Activated CD4-positive, alpha-beta memory T cell treated with anti-CD3 and anti-CD28 coated beads for 36 hours (primary cell): ENCODE measurements at regions of chr11 and their contacts with region 1.

Region 1: GRCh38 chr11:17978553-17979287 is 34.1 kb downstream of the SERGEF start:
- DNase-seq: peak; percentile 38
- H3K4me3 Mint-ChIP-seq: no peak overlapping the region
- H3K27ac Mint-ChIP-seq: no peak overlapping the region
- H3K4me1 Mint-ChIP-seq: peaks cover 3% of the 10 kb centered on the region
- H3K27me3 Mint-ChIP-seq: no peaks in the 10 kb centered on the region

Region 2: GRCh38 chr11:17598700-17599459 is 379.8 kb before region 1 on chr11:
- CTCF ChIA-PET with region 1: interaction called, 19 read pairs
- POLR2A ChIA-PET with region 1: no interaction called
- intact Hi-C with region 1: loop called (anchors 1 kb)
- DNase-seq: peak; percentile 80
- H3K4me3 Mint-ChIP-seq: no peak overlapping the region
- H3K27ac Mint-ChIP-seq: no peak overlapping the region
- H3K4me1 Mint-ChIP-seq: peaks cover 10% of the 10 kb centered on the region
- H3K27me3 Mint-ChIP-seq: peaks cover 3% of the 10 kb centered on the region

Region 3: GRCh38 chr11:17730608-17731462 is 247.9 kb before region 1 on chr11:
- CTCF ChIA-PET with region 1: interaction called, 168 read pairs
- POLR2A ChIA-PET with region 1: no interaction called
- intact Hi-C with region 1: loop called (anchors 1 kb)
- DNase-seq: peak; percentile 80
- H3K4me3 Mint-ChIP-seq: no peak overlapping the region
- H3K27ac Mint-ChIP-seq: no peak overlapping the region
- H3K4me1 Mint-ChIP-seq: peaks cover 5% of the 10 kb centered on the region
- H3K27me3 Mint-ChIP-seq: peaks cover 39% of the 10 kb centered on the region

Region 4: GRCh38 chr11:17760102-17761029 is 218.4 kb before region 1 on chr11:
- CTCF ChIA-PET with region 1: interaction called, 12 read pairs
- POLR2A ChIA-PET with region 1: no interaction called
- intact Hi-C with region 1: no loop called
- DNase-seq: peak; percentile 51
- H3K4me3 Mint-ChIP-seq: no peak overlapping the region
- H3K27ac Mint-ChIP-seq: no peak overlapping the region
- H3K4me1 Mint-ChIP-seq: no peaks in the 10 kb centered on the region
- H3K27me3 Mint-ChIP-seq: peaks cover 2% of the 10 kb centered on the region

Region 5: GRCh38 chr11:17968206-17968605 is 10.5 kb before region 1 on chr11:
- CTCF ChIA-PET with region 1: interaction called, 18 read pairs
- POLR2A ChIA-PET with region 1: no interaction called
- intact Hi-C with region 1: no loop called
- DNase-seq: no peak
- H3K4me3 Mint-ChIP-seq: no peak overlapping the region
- H3K27ac Mint-ChIP-seq: no peak overlapping the region
- H3K4me1 Mint-ChIP-seq: no peaks in the 10 kb centered on the region
- H3K27me3 Mint-ChIP-seq: no peaks in the 10 kb centered on the region

Region 6: GRCh38 chr11:17991783-17992433 is 13.2 kb after region 1 on chr11:
- CTCF ChIA-PET with region 1: interaction called, 47 read pairs
- POLR2A ChIA-PET with region 1: no interaction called
- intact Hi-C with region 1: no loop called
- DNase-seq: peak; percentile 57
- H3K4me3 Mint-ChIP-seq: no peak overlapping the region
- H3K27ac Mint-ChIP-seq: no peak overlapping the region
- H3K4me1 Mint-ChIP-seq: peaks cover 2% of the 10 kb centered on the region
- H3K27me3 Mint-ChIP-seq: no peaks in the 10 kb centered on the region